Left lung (tissue), 14 donors: ENCODE measurements at regions of chr5 and their contacts with region 1.

Region 1: DNA sequence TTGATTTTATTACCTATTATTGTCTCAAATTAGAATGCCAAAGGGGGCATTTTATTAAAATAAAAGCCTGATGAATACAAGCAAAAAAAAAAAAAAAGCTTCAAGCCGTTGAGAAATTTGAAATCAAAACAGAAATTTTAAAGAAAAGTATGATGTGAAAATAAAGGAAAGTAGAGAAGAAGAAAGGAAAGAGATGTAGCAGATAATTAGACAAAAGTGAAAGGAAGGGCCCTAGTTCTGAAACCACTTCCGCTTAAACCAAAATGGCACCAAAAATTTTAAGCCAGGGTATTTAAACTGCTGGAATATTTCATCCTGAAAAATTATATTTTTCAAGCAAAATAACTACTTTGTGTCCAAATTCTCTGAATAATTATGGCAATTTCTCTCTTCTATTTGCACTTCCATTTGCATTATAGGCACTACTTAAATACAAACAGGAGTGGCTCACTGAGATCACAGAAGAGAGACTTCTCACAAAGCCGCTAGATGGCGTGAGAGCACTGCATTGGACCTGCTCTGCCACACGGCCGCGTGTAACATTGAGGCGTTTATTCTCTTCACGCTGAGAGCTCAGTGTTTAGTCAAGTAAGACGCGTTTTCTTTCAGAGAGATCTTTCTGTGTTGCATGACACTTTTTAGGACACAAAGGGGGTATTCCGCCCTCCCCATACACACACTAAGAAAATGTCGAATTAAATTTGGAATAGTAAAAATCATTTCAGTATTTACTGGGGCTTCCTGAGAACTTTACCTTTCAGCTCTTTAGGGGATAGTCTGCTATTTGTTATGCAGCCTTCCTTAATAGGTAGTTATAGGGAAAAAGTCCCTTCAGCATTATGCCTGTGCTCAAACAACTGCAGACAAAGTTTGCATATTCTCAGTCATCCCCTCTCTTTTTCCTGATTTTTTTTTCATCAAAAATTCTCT is 368.4 kb upstream of the CCNH start:
- DNase-seq: peak; percentile 65 to 88 (median 73)
- ATAC-seq: peak; percentile 100
- H3K4me3 ChIP-seq: no peak overlapping the region
- H3K27ac ChIP-seq: no peak overlapping the region
- H3K4me1 ChIP-seq: no peaks in the 10 kb centered on the region
- H3K27me3 ChIP-seq: peaks cover 20 to 47% of the 10 kb centered on the region in 2 donors
- CTCF ChIP-seq: peak; percentile 76 to 85

Region 2: DNA sequence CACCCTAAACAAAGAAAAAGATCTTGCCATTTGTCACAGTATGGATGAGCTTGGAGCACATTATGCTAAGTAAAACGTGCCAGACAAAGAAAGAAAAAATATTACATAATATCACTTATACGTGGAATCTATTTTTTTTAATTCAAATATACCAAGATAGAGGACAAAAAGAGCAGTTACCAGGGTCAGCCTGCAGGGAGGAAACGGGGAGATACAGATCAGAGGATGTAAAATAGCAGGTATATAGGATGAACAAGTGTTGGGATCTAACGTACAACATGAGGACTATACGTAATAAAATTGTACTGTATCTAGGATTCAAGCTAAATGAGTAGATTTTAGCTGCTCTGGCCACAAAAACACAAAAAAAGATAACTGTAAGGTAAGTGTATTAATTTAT is 240.0 kb after region 1 on chr5:
- intact Hi-C with region 1: no loop called
- DNase-seq: no peak
- ATAC-seq: no peak
- H3K4me3 ChIP-seq: no peak overlapping the region
- H3K27ac ChIP-seq: no peak overlapping the region
- H3K4me1 ChIP-seq: no peaks in the 10 kb centered on the region
- H3K27me3 ChIP-seq: no peaks in the 10 kb centered on the region
- CTCF ChIP-seq: no peak

Region 3: DNA sequence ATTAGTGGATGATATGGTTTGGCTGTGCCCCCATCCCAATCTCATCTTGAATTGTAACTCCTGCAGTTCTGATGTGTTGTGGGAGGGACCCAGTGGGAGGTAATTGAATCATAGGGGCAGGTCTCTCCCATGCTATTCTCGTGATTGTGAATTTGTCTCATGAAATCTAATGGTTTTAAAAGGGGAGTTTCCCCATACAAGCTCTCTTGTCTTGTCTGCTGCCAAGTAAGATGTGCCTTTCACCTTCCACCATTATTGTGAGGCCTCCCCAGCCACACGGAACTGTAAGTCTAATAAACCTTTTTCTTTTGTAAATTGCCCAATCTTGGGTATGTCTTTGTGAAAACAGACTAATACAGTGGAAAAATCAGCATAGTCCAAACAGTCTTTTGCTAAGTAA is 252.1 kb after region 1 on chr5:
- intact Hi-C with region 1: no loop called
- DNase-seq: no peak
- ATAC-seq: no peak
- H3K4me3 ChIP-seq: no peak overlapping the region
- H3K27ac ChIP-seq: no peak overlapping the region
- H3K4me1 ChIP-seq: no peaks in the 10 kb centered on the region
- H3K27me3 ChIP-seq: no peaks in the 10 kb centered on the region
- CTCF ChIP-seq: no peak

Region 4: GRCh38 chr5:88690409-88691229 is 909.5 kb after region 1 on chr5:
- intact Hi-C with region 1: loop called in 1 of 2 experiments (anchors 5 kb)
- DNase-seq: peak; percentile 73 to 91 (median 75)
- ATAC-seq: peak; percentile 97
- H3K4me3 ChIP-seq: peak overlapping the region in 1 of 2 donors; percentile 7
- H3K27ac ChIP-seq: no peak overlapping the region
- H3K4me1 ChIP-seq: peaks cover 3 to 24% of the 10 kb centered on the region in 2 donors
- H3K27me3 ChIP-seq: peaks cover 100% of the 10 kb centered on the region in 2 donors
- CTCF ChIP-seq: peak; percentile 90 to 95